ENCODE measurements at regions of chr5 and their contacts with region 1.

Region 1: DNA sequence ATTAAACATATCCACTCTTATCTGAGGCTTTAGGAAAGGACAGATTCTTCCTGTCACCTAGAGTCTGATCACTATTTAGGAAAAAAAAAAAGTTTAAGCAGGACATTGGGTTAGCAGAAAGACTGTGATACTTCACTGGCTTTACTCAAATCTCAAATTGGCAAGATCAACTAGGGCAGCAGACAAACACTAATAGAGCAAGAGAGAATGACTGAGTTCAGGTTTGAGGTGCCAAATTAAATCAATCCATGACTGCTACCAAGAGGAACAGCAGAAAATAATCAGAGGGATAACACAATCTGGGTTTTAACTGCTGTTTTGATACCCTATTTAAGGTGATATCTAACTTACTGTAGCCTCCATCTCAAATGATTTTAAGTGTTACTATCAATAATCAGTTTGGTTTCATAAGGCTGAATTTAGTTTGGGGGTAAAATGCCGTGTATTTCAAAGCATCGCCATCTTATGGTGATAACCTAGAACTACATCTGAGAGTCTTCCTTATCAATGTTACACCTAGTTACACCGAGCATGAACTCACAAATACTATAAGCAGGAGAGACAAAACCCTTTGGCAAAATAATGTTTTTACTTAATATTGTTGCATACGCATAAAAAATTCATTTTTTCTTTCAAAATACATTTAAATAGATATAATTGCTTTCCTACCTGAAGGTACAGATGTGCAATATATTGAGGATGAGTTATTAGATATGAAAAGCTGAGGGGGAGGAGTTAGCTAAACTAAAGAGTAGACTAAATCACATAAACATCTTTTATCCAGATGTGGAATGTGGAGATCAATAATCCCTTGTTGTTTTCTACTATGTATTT is 286.4 kb upstream of the CDH12 start:
- DNase-seq: no peak
- ATAC-seq: no peak
- H3K4me3 ChIP-seq: no peak overlapping the region
- H3K27ac ChIP-seq: no peak overlapping the region
- H3K4me1 ChIP-seq: no peaks in the 10 kb centered on the region
- H3K27me3 ChIP-seq: no peaks in the 10 kb centered on the region

Region 2: DNA sequence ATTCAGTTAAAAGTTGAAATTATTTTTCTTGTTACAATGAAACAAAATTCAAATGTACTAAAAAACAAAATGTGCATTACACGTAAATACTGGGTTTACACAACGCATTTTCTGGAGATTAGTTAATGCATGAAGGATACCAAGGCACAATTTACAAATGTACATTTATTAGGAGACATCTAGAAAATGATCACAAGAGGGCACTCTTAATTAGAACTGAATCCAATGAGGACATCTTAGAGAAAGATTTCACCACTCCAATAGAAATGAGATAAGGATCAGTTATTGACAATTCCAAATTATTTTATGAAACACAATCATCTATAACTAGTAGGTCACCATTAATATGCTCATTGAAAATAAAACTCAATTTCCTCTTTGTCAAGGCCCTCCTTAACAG is 249.8 kb before region 1 on chr5:
- intact Hi-C with region 1: loop called in 3 of 4 experiments (anchors 5 to 10 kb)
- DNase-seq: no peak
- ATAC-seq: no peak
- H3K4me3 ChIP-seq: no peak overlapping the region
- H3K27ac ChIP-seq: no peak overlapping the region
- H3K4me1 ChIP-seq: no peaks in the 10 kb centered on the region
- H3K27me3 ChIP-seq: no peaks in the 10 kb centered on the region

Region 3: GRCh38 chr5:22985446-22985845 is 154.1 kb before region 1 on chr5:
- intact Hi-C with region 1: no loop called
- DNase-seq: no peak
- ATAC-seq: no peak
- H3K4me3 ChIP-seq: no peak overlapping the region
- H3K27ac ChIP-seq: no peak overlapping the region
- H3K4me1 ChIP-seq: no peaks in the 10 kb centered on the region
- H3K27me3 ChIP-seq: no peaks in the 10 kb centered on the region

Measured in right cardiac atrium (tissue), 5 donors.